Activated T-helper 2 cell treated with anti-CD3 and anti-CD28 coated beads, Interferon-gamma antibody, Interleukin-2, Interleukin-4, amounts not matched to agents 10 μg/mL and 5 μg/mL and 100 μg/mL, durations not matched to agents 14 hours and 24 hours and 36 hours (primary cell): ENCODE measurements at regions of chr7 and their contacts with region 1.

Region 1: GRCh38 chr7:135558337-135558767 is 635 bp downstream of the NUP205 start:
- DNase-seq: peak; percentile 64
- H3K4me3 Mint-ChIP-seq: no peak overlapping the region
- H3K27ac Mint-ChIP-seq: no peak overlapping the region
- H3K4me1 Mint-ChIP-seq: peaks cover 19% of the 10 kb centered on the region
- H3K27me3 Mint-ChIP-seq: peaks cover 1% of the 10 kb centered on the region

Region 2: GRCh38 chr7:135414850-135415439 is 143.4 kb before region 1 on chr7:
- intact Hi-C with region 1: loop called (anchors 5 kb)
- DNase-seq: no peak
- H3K4me3 Mint-ChIP-seq: no peak overlapping the region
- H3K27ac Mint-ChIP-seq: no peak overlapping the region
- H3K4me1 Mint-ChIP-seq: peaks cover 2% of the 10 kb centered on the region
- H3K27me3 Mint-ChIP-seq: no peaks in the 10 kb centered on the region